MCF 10A (cell line): ENCODE measurements at regions of chr20 and their contacts with region 1.

Region 1: GRCh38 chr20:38033310-38034107 is at the starts of genes RPRD1B and TTI1:
- DNase-seq: peak; percentile 92
- H3K4me3 Mint-ChIP-seq: peak within 1 kb of the TSS; percentile 82
- H3K27ac Mint-ChIP-seq: peak within 1 kb of the TSS; percentile 92
- H3K4me1 Mint-ChIP-seq: peaks cover 41% of the 10 kb centered on the region
- H3K27me3 Mint-ChIP-seq: no peaks in the 10 kb centered on the region
- CTCF ChIP-seq: no peak
- total RNA-seq, gene RPRD1B: 42.6 and 53.0 TPM in 2 replicates
- total RNA-seq, gene TTI1: 17.1 and 18.3 TPM in 2 replicates

Region 2: DNA sequence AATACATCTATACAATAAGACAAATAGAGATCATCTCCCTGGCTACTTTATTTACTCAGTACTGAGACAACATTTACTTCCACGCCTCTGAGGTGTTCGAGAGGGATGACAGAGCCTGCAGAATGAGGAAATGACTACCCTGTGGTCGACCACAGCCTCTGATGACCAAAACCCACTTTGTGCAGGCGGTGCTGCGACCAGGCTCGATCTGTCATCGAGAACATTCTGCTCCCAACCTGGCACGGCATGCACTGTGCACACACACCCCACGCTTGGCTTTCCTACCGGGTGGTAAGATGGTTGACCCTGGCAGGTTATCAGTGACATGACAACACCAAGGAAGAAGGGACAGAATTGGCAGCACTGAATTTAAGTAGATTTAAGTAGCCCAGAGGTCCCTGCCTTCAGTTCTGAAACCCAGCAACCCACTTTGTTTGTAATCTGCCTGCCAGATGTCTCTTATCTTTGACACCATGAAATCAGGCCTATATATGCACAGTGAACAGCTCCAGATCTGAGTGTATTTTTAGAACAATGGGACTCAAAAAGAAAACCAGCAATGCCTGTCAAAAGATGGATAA is 42.8 kb before region 1 on chr20:
- CTCF ChIA-PET with region 1: interaction called, 7 read pairs
- POLR2A ChIA-PET with region 1: interaction called, 67 read pairs
- intact Hi-C with region 1: loop called (anchors 5 kb)
- DNase-seq: peak; percentile 50
- H3K4me3 Mint-ChIP-seq: peak overlapping the region; percentile 40
- H3K27ac Mint-ChIP-seq: peak overlapping the region; percentile 83
- H3K4me1 Mint-ChIP-seq: peaks cover 76% of the 10 kb centered on the region
- H3K27me3 Mint-ChIP-seq: no peaks in the 10 kb centered on the region
- CTCF ChIP-seq: no peak

Region 3: GRCh38 chr20:38007526-38007925 is 26.0 kb before region 1 on chr20:
- CTCF ChIA-PET with region 1: interaction called, 3 read pairs
- POLR2A ChIA-PET with region 1: interaction called, 11 read pairs
- intact Hi-C with region 1: no loop called
- DNase-seq: no peak
- H3K4me3 Mint-ChIP-seq: no peak overlapping the region
- H3K27ac Mint-ChIP-seq: no peak overlapping the region
- H3K4me1 Mint-ChIP-seq: peaks cover 6% of the 10 kb centered on the region
- H3K27me3 Mint-ChIP-seq: no peaks in the 10 kb centered on the region
- CTCF ChIP-seq: no peak

Region 4: DNA sequence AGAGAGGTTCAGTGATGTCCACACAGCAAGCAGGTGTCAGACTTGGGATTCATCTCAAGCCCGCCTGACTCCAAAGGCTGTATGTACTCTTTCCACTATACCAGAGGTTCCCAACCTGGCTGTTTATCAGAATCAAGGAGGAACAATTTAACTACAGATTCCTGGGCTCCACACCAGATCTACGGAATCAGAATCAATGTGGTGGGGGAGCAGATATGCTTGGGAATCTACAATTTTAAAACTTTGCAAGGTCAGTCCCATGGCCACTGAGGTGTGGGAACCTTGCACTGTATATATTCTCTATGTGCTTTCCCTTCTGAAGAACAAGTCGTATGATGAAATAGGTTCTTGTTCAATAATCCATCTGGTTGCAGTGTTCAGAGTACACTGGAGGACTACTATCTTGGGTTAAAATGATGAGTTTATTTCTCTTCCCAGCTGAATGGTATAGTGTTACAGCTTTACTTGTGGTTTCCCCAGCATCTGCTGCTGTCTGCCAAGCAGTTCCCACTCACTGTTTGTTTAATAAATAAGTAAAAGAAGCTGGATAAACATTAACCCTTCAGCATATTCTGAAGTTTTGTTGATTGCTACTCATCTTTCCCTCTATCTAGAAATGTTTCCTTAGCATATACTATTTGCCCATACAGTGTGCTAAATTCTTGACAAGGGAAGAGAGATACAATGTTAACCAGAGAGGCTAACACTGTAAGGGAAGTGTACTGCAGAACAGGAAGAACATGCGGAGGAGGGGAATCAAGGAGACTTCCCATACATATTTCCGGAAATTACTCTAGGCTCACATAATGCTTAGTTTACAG is 10.1 kb before region 1 on chr20:
- CTCF ChIA-PET with region 1: interaction called, 3 read pairs
- POLR2A ChIA-PET with region 1: interaction called, 15 read pairs
- intact Hi-C with region 1: no loop called
- DNase-seq: peak; percentile 49
- H3K4me3 Mint-ChIP-seq: no peak overlapping the region
- H3K27ac Mint-ChIP-seq: no peak overlapping the region
- H3K4me1 Mint-ChIP-seq: peaks cover 17% of the 10 kb centered on the region
- H3K27me3 Mint-ChIP-seq: no peaks in the 10 kb centered on the region
- CTCF ChIP-seq: no peak

Region 5: DNA sequence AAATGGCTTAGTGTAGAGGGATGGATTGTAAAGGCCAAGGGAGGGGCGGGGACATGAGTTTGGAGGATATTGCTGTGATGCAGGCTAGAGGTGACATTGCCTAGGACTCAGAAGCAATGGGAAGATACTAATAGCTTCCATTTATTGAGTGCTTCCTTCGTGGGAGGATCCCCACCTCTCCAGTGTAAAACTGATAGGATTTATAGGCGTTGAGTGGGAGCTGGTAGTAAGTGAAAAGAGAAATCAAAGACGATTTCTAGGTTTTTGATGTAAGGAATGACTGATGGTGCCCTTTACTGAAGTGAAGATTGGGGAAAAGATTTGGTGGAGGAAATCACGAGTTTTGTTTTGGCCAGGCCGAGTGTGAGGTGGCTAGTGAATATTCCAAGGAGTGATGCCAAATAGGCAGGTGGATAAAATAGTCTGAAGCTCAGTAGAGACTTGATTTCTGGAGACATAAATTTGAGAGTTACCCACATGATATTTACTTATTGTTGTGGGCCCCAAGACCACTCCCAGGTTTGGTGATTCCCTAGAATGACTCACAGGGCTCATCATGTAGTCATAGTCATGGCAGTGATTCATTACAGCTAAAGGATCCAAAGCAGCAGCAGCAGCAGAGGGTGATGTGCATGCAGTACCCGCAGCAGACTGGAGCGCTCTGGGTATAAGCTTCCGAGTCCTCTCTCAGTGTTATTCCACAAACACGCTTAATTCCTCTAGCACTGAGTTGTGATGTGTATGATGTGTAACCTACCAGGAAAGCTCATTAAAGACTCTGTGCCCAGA is 10.2 kb after region 1 on chr20:
- CTCF ChIA-PET with region 1: interaction called, 19 read pairs
- POLR2A ChIA-PET with region 1: interaction called, 56 read pairs
- intact Hi-C with region 1: no loop called
- DNase-seq: peak; percentile 85
- H3K4me3 Mint-ChIP-seq: no peak overlapping the region
- H3K27ac Mint-ChIP-seq: peak overlapping the region; percentile 88
- H3K4me1 Mint-ChIP-seq: peaks cover 19% of the 10 kb centered on the region
- H3K27me3 Mint-ChIP-seq: no peaks in the 10 kb centered on the region
- CTCF ChIP-seq: no peak

Region 6: DNA sequence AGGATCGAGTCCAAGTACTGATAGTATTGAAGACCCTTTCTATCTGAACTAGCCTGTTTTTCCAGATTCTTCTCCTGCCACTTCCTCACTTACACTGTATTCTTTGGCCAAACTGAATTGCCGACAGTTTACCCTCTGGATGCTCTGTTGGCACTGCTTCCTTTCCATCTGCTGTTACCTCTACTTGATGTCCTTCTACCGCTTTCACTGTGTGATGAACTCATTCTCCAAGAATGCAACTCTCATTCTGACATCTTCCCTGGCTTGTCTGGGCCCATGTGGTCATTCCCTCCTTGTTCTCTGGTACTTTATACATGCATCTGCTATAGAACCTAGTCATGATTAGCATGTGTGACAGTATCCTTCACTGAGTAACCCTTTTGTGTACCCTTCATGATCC is 16.3 kb after region 1 on chr20:
- CTCF ChIA-PET with region 1: interaction called, 19 read pairs
- POLR2A ChIA-PET with region 1: interaction called, 38 read pairs
- intact Hi-C with region 1: no loop called
- DNase-seq: peak; percentile 39
- H3K4me3 Mint-ChIP-seq: no peak overlapping the region
- H3K27ac Mint-ChIP-seq: peak overlapping the region; percentile 1
- H3K4me1 Mint-ChIP-seq: peaks cover 21% of the 10 kb centered on the region
- H3K27me3 Mint-ChIP-seq: no peaks in the 10 kb centered on the region
- CTCF ChIP-seq: no peak